ENCODE measurements at regions of chr14 and their contacts with region 1.

Region 1: GRCh38 chr14:78566026-78566858 is 396.1 kb downstream of the NRXN3 start:
- DNase-seq: peak; percentile 90

Region 2: GRCh38 chr14:77409131-77409533 is 1157.1 kb before region 1 on chr14:
- intact Hi-C with region 1: no loop called
- DNase-seq: no peak

Region 3: DNA sequence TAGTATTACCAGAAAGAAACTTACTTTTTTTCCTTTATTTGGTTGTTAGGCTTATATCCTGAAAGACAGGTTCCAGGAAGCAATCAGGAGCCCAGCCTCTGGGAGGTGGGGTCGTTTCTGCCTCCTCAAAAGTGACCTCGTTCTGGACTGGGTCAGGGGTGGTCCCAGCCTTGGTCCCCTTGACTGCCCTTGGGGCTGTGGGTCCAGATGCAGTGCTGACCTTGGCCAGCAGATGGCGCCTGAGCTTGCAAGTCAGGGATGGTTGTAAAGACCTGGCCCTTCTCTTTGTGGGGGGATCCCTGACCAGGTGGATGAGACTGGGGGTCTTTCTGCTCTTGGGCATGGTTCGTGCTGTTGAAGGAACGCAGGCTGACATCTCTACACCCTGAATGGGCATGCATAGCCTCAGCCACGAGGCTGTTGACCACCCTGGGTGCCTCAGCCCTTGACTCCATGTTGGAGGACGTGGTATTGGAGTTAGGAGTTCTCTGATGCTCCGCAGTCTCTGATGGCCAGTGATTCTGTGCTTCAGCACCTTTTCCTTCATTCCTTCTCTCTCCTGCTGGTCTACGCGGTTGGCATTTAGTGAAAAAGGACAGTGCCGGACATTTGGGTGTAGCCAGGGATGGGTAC is 704.0 kb before region 1 on chr14:
- intact Hi-C with region 1: loop called (anchors 10 kb)
- DNase-seq: peak; percentile 92

Measured in posterior vena cava (tissue), 2 donors.